ENCODE measurements at regions of chr20 and their contacts with region 1.

Region 1: DNA sequence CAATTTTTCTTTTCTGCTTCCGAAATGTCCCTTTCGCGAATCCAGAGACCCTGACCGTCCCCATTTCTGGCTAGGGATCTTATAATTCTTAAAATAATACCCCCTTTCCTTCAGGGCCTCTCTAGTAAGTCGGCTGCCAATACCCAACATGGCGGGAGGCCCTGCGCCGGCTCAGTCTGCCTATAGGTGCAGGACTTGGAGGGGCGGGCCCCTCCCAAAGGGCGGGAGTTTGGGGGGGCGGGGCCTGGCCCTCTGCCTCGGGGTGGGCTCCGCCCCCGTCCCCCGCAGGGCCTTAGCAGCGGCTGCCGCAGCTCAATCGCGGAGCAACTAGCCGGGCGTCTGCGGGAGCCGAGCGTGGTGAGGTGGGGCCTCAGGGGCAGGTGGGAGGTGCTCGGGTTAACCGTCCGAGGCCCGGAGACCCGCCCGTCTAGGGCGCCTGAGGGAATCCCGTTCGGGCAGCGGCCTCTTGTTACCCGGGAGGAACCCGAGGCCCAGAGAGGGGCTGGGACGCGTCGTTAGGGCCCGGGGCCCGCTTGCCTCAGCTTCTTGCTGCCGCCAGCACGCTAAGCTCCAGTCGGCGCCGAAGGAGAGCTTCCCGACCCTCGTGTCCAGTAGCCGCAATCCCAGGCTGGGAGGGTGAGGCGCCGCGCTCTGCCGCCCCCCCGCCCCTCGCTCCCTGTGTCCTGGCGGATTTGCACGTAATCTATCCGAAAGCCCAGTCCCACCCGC is at the start of gene CEP250:
- DNase-seq: peak; percentile 98
- ATAC-seq: peak; percentile 95
- H3K4me3 ChIP-seq: peak within 1 kb of the TSS; percentile 79 to 89 (median 87)
- H3K27ac ChIP-seq: peak within 1 kb of the TSS; percentile 97
- H3K4me1 ChIP-seq: peaks cover 38% of the 10 kb centered on the region
- H3K27me3 ChIP-seq: no peaks in the 10 kb centered on the region; a peak in 1 of 5 replicates
- CTCF ChIP-seq: no peak; the same call in 1 of the 2 replicates
- EP300 ChIP-seq: no peak
- POLR2A ChIP-seq: peak; percentile 86 to 89
- RAD21 ChIP-seq: peak; percentile 61
- total RNA-seq, gene CEP250: 55.3 and 55.7 TPM in 2 replicates

Region 2: DNA sequence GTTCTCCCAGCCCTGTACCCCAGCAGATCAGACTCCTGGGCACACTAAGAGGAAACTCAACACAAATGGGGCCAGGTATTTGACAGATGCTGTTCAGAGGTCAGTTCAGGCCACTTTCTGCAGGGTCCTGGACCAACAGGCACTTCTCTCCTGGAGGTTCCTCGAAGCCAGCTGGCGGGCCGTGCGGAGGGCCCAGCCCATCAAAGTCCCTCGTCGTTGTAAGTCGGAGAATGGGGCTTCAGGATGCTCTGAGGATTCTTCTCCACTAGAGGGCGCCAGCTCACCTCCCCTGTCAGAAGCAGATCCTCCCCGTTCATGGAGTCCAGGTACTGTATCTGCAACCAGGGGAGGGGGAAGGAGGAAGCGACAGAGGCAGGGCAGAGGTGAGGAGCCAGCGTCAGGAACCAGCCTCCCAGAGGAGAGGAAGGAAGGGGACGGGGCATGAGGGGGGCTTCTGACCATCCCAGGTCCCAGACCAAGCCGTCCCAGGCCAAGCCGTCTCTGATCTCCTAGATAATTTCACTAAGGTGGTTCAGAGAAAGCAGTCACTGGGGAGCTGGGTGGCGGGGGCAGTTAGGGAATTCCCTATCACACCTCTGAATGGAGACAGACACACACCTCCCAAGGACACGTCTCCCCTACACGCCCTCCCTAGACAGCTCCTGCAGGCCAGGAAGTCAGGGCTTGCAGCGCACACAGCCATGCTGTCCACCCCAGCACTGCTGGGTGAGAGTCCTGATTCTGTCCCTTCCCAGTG is 151.1 kb before region 1 on chr20:
- CTCF ChIA-PET with region 1: no interaction called
- POLR2A ChIA-PET with region 1: interaction called, 39 read pairs
- in situ Hi-C with region 1: no loop called
- intact Hi-C with region 1: no loop called
- DNase-seq: peak; percentile 91
- ATAC-seq: peak; percentile 74
- H3K4me3 ChIP-seq: no peak overlapping the region
- H3K27ac ChIP-seq: peak overlapping the region; percentile 49
- H3K4me1 ChIP-seq: peaks cover 49% of the 10 kb centered on the region
- H3K27me3 ChIP-seq: no peaks in the 10 kb centered on the region
- CTCF ChIP-seq: peak; percentile 100
- EP300 ChIP-seq: 0 out of 4 replicates have a peak, but pooled peaks of 1 of the 2 experiments have one; percentile 12
- POLR2A ChIP-seq: no peak
- RAD21 ChIP-seq: peak; percentile 98

Region 3: DNA sequence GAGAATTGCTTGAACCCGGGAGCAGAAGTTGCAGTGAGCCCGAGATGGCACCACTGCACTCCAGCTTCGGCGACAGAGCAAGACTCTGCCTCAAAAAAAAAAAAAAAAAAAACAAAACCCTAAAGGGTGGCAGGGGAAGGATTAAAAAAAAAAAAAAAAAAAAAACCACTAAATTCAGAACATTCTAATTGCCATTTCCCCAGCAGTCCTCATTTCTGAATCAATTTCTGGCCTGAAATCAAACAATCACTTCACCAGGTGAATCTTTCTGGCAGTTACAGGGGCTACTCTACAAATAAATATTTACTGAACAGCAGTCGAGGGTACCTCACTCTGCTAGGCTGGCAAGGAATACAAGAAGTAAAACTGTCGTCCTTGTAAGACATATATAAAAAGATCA is 44.4 kb before region 1 on chr20:
- CTCF ChIA-PET with region 1: no interaction called
- POLR2A ChIA-PET with region 1: interaction called, 20 read pairs
- in situ Hi-C with region 1: no loop called
- intact Hi-C with region 1: no loop called
- DNase-seq: no peak
- ATAC-seq: no peak
- H3K4me3 ChIP-seq: peak overlapping the region; percentile 75 to 91 (median 88)
- H3K27ac ChIP-seq: peak overlapping the region; percentile 61
- H3K4me1 ChIP-seq: peaks cover 21% of the 10 kb centered on the region
- H3K27me3 ChIP-seq: no peaks in the 10 kb centered on the region; a peak in 1 of 5 replicates
- CTCF ChIP-seq: no peak
- EP300 ChIP-seq: no peak
- POLR2A ChIP-seq: no peak
- RAD21 ChIP-seq: no peak

Region 4: GRCh38 chr20:35478804-35479472 is 23.9 kb after region 1 on chr20:
- CTCF ChIA-PET with region 1: no interaction called
- POLR2A ChIA-PET with region 1: interaction called, 33 read pairs
- in situ Hi-C with region 1: no loop called
- intact Hi-C with region 1: no loop called
- DNase-seq: peak; percentile 77
- ATAC-seq: peak; percentile 84
- H3K4me3 ChIP-seq: peak overlapping the region in 1 of 3 experiments; percentile 6; a peak in 1 of 6 replicates
- H3K27ac ChIP-seq: peak overlapping the region; percentile 57
- H3K4me1 ChIP-seq: peaks cover 37% of the 10 kb centered on the region
- H3K27me3 ChIP-seq: no peaks in the 10 kb centered on the region
- CTCF ChIP-seq: peak; percentile 87
- EP300 ChIP-seq: no peak
- POLR2A ChIP-seq: no peak
- RAD21 ChIP-seq: peak; percentile 50

Region 5: DNA sequence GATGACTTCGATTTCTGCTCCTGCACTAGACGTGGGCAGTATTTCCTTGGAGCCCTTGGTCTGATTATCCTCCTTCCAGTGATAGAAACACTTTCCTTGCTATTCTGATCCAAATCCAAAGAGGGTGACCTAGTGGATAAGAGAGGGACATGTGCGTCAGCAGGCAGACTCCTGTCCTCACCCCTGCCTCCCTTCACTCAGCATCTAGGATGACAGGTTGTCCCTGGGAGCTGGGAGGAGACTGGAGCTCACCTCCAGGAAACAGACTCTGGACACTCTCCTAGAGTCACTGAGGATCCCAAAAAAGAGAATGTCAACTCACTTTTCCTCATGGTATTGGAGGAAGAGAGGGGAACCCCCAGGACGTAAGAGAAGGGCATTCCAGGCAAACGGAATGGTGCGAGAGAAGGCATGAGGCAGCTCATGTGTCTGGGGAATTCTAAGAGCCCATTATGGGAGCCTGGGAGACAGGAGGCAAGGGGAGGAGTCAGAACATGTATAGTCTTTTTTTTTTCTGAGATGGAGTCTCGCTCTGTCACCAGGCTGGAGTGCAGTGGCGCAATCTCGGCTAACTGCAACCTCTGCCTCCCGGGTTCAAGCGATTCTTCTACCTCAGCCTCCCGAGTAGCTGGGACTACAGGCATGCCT is 72.2 kb after region 1 on chr20:
- CTCF ChIA-PET with region 1: no interaction called
- POLR2A ChIA-PET with region 1: no interaction called
- in situ Hi-C with region 1: no loop called
- intact Hi-C with region 1: no loop called
- DNase-seq: no peak
- ATAC-seq: no peak; the same call in 2 of the 3 replicates
- H3K4me3 ChIP-seq: no peak overlapping the region
- H3K27ac ChIP-seq: no peak overlapping the region
- H3K4me1 ChIP-seq: peaks cover 25% of the 10 kb centered on the region
- H3K27me3 ChIP-seq: no peaks in the 10 kb centered on the region; a peak in 1 of 5 replicates
- CTCF ChIP-seq: no peak
- EP300 ChIP-seq: no peak
- POLR2A ChIP-seq: no peak
- RAD21 ChIP-seq: no peak

Region 6: GRCh38 chr20:35619196-35620095 is 164.4 kb after region 1 on chr20:
- CTCF ChIA-PET with region 1: no interaction called
- POLR2A ChIA-PET with region 1: interaction called, 21 read pairs
- in situ Hi-C with region 1: no loop called
- intact Hi-C with region 1: loop called (anchors 2 kb)
- DNase-seq: peak; percentile 94
- ATAC-seq: peak; percentile 69
- H3K4me3 ChIP-seq: peak overlapping the region; percentile 59 to 96 (median 67)
- H3K27ac ChIP-seq: peak overlapping the region; percentile 0
- H3K4me1 ChIP-seq: peaks cover 26% of the 10 kb centered on the region
- H3K27me3 ChIP-seq: peaks cover 0 to 7% of the 10 kb centered on the region in 2 experiments; a peak in 1 of 5 replicates
- CTCF ChIP-seq: peak; percentile 93
- EP300 ChIP-seq: peak in 1 of 2 experiments; percentile 32; a peak in 1 of 4 replicates
- POLR2A ChIP-seq: peak in 1 of 2 experiments; percentile 74; a peak in 2 of 4 replicates
- RAD21 ChIP-seq: peak; percentile 78

Measured in HepG2 (cell line).